ENCODE measurements at regions of chr7 and their contacts with region 1.

Region 1: DNA sequence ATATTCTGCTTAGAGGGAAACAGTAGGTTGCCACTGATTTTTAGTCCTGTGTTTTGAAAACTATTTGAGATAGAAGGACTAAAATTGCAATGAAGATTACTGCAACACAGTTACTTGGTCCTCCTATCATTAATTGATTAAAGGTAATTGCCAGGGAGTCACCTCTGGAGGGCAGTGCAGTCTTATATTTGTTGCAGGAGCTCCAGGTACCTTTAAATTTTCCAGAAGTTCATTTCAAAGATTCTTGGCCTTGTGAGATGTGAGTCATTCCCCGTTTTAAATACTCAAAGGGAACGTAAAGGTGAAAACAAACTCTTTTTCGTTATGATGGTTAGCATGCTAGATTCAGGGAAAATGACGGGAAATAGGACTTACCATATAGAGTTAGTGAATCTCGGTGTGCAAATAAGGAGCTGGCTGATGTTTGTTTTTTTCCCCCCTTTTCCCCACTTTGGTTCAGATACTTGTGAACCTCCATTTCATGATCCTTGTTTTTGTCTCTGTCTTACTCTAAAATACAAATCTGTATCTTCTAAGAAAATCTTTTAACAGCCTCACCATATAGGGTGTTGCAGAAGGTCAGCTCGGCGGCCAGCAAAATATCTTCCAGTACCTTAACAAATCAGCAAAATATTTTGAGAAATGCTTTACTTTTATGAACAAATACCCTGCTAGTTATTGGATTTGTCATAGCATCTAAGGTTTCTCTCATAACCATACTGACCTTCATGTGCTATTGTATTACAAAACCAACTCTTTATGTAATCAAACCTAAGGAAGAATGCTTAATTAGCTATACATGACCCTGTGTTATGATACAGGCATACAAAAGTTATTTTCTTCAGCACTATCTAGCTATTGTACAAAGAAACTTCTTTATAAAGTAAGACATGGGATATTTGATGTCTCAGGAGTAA is 143.0 kb upstream of the HDAC9 start:
- DNase-seq: no peak
- H3K4me3 ChIP-seq: no peak overlapping the region
- H3K27ac ChIP-seq: no peak overlapping the region
- H3K4me1 ChIP-seq: peaks cover 0 to 5% (median 0%) of the 10 kb centered on the region in 3 donors
- H3K27me3 ChIP-seq: no peaks in the 10 kb centered on the region
- CTCF ChIP-seq: peak; percentile 25 to 70 (median 50)
- POLR2A ChIP-seq: no peak

Region 2: GRCh38 chr7:18455606-18456005 is 103.0 kb after region 1 on chr7:
- intact Hi-C with region 1: no loop called
- DNase-seq: no peak
- H3K4me3 ChIP-seq: no peak overlapping the region
- H3K27ac ChIP-seq: no peak overlapping the region
- H3K4me1 ChIP-seq: no peaks in the 10 kb centered on the region
- H3K27me3 ChIP-seq: no peaks in the 10 kb centered on the region
- CTCF ChIP-seq: no peak
- POLR2A ChIP-seq: no peak

Region 3: GRCh38 chr7:18570890-18571478 is 218.4 kb after region 1 on chr7:
- intact Hi-C with region 1: loop called (anchors 5 kb)
- DNase-seq: no peak
- H3K4me3 ChIP-seq: no peak overlapping the region
- H3K27ac ChIP-seq: no peak overlapping the region
- H3K4me1 ChIP-seq: no peaks in the 10 kb centered on the region
- H3K27me3 ChIP-seq: no peaks in the 10 kb centered on the region
- CTCF ChIP-seq: peak in 5 of 6 experiments; percentile 13 to 57 (median 35)
- POLR2A ChIP-seq: no peak

Measured in esophagus squamous epithelium (tissue), 5 donors.